ENCODE measurements at regions of chr20 and their contacts with region 1.

Region 1: GRCh38 chr20:63223221-63224207 is 7.6 kb upstream of the YTHDF1 start:
- DNase-seq: peak; percentile 66
- CTCF ChIP-seq: peak; percentile 78

Region 2: DNA sequence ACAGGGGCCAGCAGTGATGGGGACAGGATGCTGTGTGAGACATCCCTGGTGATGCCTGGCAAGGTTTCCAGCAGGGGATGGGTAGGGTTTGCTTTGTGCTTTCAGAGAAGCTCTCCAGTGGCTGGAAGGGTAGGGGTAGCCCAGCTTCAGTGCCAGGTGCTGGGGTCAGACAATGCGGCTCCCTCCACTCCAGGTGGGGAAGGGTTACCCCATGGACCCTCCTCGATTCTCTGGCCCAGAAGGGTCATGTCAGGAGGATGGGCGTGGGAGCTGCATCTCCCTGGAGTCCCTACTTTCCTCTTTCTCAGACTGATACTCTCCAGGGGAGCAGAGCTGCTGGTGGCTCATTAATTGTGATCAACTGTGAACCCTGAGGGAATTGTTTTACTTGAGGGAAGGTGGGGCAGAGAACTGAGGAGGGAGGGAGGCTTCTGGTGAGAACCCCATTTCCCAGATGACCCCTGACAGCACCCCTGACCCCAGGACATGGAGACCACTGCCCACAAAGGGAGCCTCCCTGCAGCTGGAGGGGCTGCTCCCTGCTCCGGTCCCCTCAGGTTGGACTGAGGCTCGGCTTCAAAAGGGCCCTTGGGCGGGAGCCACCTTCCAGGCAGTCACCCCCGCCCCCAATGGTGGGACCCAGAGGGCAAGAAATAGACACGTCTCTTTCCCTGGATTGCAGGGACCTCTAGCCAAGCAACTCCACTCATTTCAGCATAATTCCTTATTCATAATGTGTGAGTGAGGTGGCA is 115.9 kb before region 1 on chr20:
- CTCF ChIA-PET with region 1: no interaction called
- POLR2A ChIA-PET with region 1: no interaction called
- DNase-seq: no peak
- CTCF ChIP-seq: no peak

Region 3: GRCh38 chr20:63178889-63179686 is 44.4 kb before region 1 on chr20:
- CTCF ChIA-PET with region 1: interaction called, 13 read pairs
- POLR2A ChIA-PET with region 1: no interaction called
- DNase-seq: peak; percentile 86
- CTCF ChIP-seq: peak; percentile 74

Region 4: DNA sequence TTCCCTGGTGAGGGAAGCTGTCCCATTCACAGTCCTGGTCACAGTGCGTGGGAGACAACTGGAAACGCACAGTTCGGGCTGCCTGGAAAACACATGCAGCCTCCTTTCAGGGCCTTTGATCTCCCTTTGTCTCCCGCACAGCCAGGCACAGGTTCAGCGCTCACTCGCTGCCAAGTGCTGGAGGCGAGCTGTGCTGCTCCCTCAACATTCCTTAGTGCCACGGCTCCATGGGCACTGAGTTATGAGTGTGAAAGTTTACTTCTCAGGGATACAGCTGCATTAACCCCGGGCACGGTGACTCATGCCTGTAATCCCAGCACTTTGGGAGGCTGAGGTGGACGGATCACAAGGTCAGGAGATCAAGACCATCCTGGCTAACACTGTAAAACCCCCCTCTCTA is 16.6 kb before region 1 on chr20:
- CTCF ChIA-PET with region 1: interaction called, 65 read pairs
- POLR2A ChIA-PET with region 1: no interaction called
- DNase-seq: no peak
- CTCF ChIP-seq: no peak

Region 5: DNA sequence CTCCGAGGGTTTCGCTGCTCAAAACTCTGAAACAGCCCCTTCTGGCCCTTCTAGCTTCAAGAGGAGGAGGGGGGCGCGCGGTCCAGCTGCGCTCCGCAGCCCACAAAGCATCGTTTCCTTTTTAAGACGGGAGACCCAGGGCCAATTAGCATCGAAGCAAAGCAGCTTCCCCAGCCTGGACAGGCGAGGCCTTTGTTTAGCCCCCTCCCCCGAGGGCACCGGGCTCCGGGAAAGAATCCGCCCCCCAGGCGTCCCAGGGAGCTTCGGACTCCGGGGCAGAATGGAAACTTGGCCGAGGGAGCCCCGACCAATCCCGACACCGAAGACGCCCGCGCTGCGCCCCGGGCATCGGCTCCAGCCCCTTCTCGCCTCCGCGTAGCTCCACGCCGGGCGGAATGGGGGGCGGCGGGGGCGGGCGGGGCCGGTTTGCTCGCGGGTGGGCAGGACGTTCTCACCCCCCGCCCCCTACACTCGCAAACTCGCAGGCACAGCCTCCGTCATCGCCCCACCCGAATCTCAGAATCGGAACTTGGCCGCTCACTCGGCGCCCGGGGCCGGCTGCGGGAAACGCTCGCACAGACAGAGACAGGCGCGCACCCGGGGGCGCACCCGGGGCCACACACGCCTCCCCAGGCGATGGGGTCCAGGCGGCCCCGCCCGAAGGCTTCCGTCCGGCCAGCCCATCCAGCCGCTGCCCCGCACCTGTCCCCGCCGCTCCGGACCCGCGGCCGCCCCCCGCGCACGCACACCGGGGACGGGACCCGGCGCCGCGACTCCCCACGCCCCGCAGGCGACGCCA is 30.1 kb after region 1 on chr20:
- CTCF ChIA-PET with region 1: interaction called, 19 read pairs
- POLR2A ChIA-PET with region 1: no interaction called
- DNase-seq: no peak
- CTCF ChIP-seq: no peak

Region 6: GRCh38 chr20:63272584-63273579 is 49.4 kb after region 1 on chr20 and contains the start of gene ARFGAP1:
- CTCF ChIA-PET with region 1: interaction called, 15 read pairs
- POLR2A ChIA-PET with region 1: no interaction called
- DNase-seq: peak; percentile 99
- CTCF ChIP-seq: no peak

Measured in GM10248 (cell line).